Panc1 (cell line): ENCODE measurements at regions of chr3 and their contacts with region 1.

Region 1: GRCh38 chr3:99753268-99753975 is 64.2 kb upstream of the CMSS1 start:
- DNase-seq: peak; percentile 43
- ATAC-seq: peak; percentile 94
- H3K4me3 ChIP-seq: no peak overlapping the region
- H3K27ac ChIP-seq: no peak overlapping the region
- H3K4me1 ChIP-seq: no peaks in the 10 kb centered on the region
- H3K27me3 ChIP-seq: peaks cover 30% of the 10 kb centered on the region
- CTCF ChIP-seq: peak; percentile 85

Region 2: GRCh38 chr3:98602078-98602678 is 1151.2 kb before region 1 on chr3:
- CTCF ChIA-PET with region 1: no interaction called
- POLR2A ChIA-PET with region 1: no interaction called
- in situ Hi-C with region 1: no loop called
- intact Hi-C with region 1: loop called (anchors 5 kb)
- DNase-seq: peak; percentile 36
- ATAC-seq: peak; percentile 92
- H3K4me3 ChIP-seq: no peak overlapping the region
- H3K27ac ChIP-seq: no peak overlapping the region
- H3K4me1 ChIP-seq: no peaks in the 10 kb centered on the region
- H3K27me3 ChIP-seq: peaks cover 2% of the 10 kb centered on the region; the same call in 1 of the 2 replicates
- CTCF ChIP-seq: peak; percentile 81

Region 3: GRCh38 chr3:99023590-99024192 is 729.7 kb before region 1 on chr3:
- CTCF ChIA-PET with region 1: no interaction called
- POLR2A ChIA-PET with region 1: no interaction called
- in situ Hi-C with region 1: no loop called
- intact Hi-C with region 1: loop called (anchors 2 kb)
- DNase-seq: no peak
- ATAC-seq: no peak
- H3K4me3 ChIP-seq: no peak overlapping the region
- H3K27ac ChIP-seq: no peak overlapping the region
- H3K4me1 ChIP-seq: no peaks in the 10 kb centered on the region
- H3K27me3 ChIP-seq: no peaks in the 10 kb centered on the region
- CTCF ChIP-seq: peak; percentile 74; the same call in 1 of the 2 replicates

Region 4: GRCh38 chr3:99114565-99115291 is 638.7 kb before region 1 on chr3:
- CTCF ChIA-PET with region 1: no interaction called
- POLR2A ChIA-PET with region 1: no interaction called
- in situ Hi-C with region 1: no loop called
- intact Hi-C with region 1: loop called (anchors 2 kb)
- DNase-seq: no peak
- ATAC-seq: peak; percentile 70; the same call in 1 of the 2 replicates
- H3K4me3 ChIP-seq: no peak overlapping the region
- H3K27ac ChIP-seq: no peak overlapping the region
- H3K4me1 ChIP-seq: no peaks in the 10 kb centered on the region
- H3K27me3 ChIP-seq: no peaks in the 10 kb centered on the region
- CTCF ChIP-seq: peak; percentile 58

Region 5: DNA sequence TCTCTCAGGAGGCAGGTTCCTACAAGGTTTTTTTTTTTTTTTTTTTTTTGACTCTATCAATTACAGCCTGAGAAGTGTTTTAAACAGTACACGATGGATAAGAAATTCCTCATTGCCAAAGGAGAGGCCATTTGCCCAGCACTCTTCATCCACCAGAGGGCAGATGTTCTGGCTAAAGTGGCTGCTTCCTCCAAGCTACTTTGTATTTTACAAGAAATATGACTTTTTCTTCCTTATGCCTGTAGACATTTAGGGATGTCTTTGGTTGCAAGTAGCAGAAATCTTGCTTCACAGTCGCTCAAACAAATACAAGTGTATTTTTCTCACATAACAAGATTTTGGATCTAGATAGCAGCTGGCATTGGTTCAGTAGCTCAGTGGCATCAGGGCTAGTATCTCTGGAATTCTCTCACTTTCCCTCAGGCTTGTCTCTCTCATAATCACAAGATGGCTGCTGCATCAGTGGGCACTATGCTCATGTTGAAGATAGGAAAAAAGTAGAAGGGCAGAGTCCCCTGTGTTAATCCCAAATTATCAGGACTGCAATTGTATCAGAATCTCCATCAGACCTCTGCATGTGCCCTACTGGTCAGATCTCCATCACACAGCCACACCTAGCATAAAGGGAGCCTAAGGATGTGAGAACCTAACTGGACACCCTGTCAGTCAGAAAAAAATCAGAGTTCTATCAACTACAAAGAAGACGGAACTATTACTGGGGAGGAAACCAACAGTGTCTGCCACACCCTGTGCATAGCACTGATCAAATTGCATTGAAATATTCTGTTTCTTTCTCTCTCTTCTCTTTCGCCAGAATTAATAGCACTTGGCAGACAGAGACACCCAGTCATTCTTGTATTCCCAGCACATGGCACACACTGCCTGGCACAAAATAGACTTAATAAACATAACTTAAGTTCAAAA is 253.9 kb before region 1 on chr3:
- CTCF ChIA-PET with region 1: interaction called, 5 read pairs
- POLR2A ChIA-PET with region 1: no interaction called
- in situ Hi-C with region 1: no loop called
- intact Hi-C with region 1: loop called (anchors 1 kb)
- DNase-seq: peak; percentile 28
- ATAC-seq: peak; percentile 86
- H3K4me3 ChIP-seq: no peak overlapping the region
- H3K27ac ChIP-seq: no peak overlapping the region
- H3K4me1 ChIP-seq: no peaks in the 10 kb centered on the region
- H3K27me3 ChIP-seq: no peaks in the 10 kb centered on the region
- CTCF ChIP-seq: peak; percentile 76

Region 6: GRCh38 chr3:99645277-99646106 is 107.9 kb before region 1 on chr3:
- CTCF ChIA-PET with region 1: no interaction called
- POLR2A ChIA-PET with region 1: no interaction called
- in situ Hi-C with region 1: no loop called
- intact Hi-C with region 1: loop called (anchors 5 kb)
- DNase-seq: peak; percentile 13
- ATAC-seq: no peak
- H3K4me3 ChIP-seq: no peak overlapping the region
- H3K27ac ChIP-seq: no peak overlapping the region
- H3K4me1 ChIP-seq: no peaks in the 10 kb centered on the region
- H3K27me3 ChIP-seq: peaks cover 32% of the 10 kb centered on the region
- CTCF ChIP-seq: peak; percentile 85